Posterior vena cava (tissue), 2 donors: ENCODE measurements at regions of chr12 and their contacts with region 1.

Region 1: DNA sequence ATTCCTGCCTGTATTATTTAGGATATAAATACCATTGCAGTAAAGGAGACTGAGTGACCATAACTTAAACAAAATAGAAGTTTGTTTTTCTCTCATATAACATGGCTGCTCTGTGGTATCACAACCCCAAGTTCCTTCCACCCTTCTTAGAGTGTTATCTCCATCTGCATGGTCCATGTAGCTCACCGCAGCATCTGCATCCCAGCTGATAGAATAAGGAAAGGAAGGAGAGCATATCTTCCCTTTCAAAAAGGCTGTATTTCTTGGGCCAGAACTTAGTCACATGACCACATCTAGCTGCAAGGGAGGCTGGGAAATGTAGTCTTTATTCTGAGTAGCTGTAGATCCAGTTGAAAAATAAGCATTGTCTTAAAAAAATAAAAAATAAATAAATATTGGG is 184.8 kb upstream of the NUDT4 start:
- DNase-seq: no peak

Region 2: DNA sequence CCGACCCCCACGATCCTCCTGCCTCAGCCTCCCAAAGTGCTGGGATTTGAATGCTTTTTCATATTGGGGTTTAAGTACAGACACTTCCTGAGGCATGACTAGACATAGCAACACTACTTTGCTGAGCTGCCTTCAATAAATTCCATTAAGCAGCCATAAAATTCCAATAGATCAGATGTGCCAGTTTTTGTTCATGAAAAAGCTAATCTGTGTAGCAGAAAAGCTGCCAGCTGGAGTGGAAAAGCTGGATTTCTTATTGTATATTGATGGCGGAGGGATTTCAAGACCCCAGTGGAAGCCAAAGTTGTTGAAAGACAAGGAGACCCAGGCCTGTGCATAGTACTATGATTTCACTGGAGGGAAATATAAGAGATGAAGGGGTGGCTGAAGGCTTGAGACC is 24.1 kb before region 1 on chr12:
- intact Hi-C with region 1: loop called in 1 of 2 experiments (anchors 1 kb)
- DNase-seq: no peak

Region 3: DNA sequence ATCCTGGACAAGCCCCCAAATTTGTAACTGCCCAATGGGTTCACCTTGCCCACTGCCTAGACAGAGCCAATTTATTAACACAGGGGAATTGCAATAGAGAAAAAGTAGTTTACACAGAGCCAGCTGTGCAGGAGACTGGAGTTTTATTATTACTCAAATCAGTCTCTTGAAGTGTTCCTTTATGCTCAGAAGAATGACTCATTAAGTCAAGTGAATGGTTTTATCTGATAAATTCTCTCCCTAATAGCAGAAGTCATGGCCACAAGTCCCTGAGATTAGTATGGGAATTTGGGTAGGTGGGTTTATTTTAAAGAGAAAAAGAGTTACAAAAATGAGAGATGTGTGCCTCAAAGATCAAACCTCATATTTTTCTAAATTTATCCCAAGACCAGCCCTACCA is 62.0 kb after region 1 on chr12:
- intact Hi-C with region 1: loop called in 1 of 2 experiments (anchors 2 kb)
- DNase-seq: no peak